ENCODE measurements at regions of chr1 and their contacts with region 1.

Region 1: DNA sequence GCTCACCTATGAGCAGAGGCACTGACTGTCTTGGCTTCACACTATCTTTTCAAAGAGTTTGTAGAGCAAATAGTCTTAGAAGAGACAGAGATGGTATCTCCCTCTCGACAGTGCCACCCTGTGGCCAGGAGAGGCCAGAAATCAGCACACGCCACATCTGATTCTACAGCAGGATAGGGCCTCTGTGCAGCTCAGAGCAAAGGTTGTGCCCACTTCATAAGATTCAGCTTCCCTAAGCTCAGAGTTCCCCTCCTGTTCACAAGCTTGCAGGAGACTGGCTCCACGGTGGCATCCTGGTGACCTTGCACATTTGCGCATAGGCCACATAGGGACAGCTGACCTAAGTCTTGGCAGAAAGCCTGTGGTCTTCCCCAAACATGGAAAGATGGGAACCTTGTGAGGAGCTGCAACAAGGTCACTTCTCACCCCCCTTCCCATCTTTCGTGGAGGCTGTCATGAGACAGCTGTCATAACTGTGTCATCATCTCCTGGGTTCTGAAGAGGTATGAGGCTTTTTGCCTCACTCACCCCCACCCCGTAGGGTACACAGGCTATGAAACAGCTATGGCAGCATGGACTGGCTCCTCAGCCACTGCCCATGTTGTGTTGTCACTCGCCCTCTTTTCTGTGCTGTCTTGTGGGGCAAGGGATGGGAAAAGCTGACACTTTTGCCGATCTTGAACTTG is 3.0 kb downstream of the ITLN2 start:
- DNase-seq: peak; percentile 43 to 86 (median 70)
- H3K4me3 ChIP-seq: no peak overlapping the region
- H3K27ac ChIP-seq: no peak overlapping the region
- H3K4me1 ChIP-seq: peaks cover 13% of the 10 kb centered on the region
- H3K27me3 ChIP-seq: no peaks in the 10 kb centered on the region
- CTCF ChIP-seq: peak in 1 of 3 donors; percentile 25
- EP300 ChIP-seq: no peak
- POLR2A ChIP-seq: no peak

Region 2: GRCh38 chr1:160590488-160590887 is 361.1 kb before region 1 on chr1:
- intact Hi-C with region 1: no loop called
- DNase-seq: no peak
- H3K4me3 ChIP-seq: no peak overlapping the region
- H3K27ac ChIP-seq: no peak overlapping the region
- H3K4me1 ChIP-seq: no peaks in the 10 kb centered on the region
- H3K27me3 ChIP-seq: no peaks in the 10 kb centered on the region
- CTCF ChIP-seq: no peak
- EP300 ChIP-seq: no peak
- POLR2A ChIP-seq: no peak

Region 3: GRCh38 chr1:160837558-160838205 is 113.9 kb before region 1 on chr1:
- intact Hi-C with region 1: loop called in 1 of 4 experiments (anchors 5 kb)
- DNase-seq: peak in 4 of 5 donors; percentile 23 to 64 (median 30)
- H3K4me3 ChIP-seq: no peak overlapping the region
- H3K27ac ChIP-seq: no peak overlapping the region
- H3K4me1 ChIP-seq: peaks cover 4% of the 10 kb centered on the region
- H3K27me3 ChIP-seq: no peaks in the 10 kb centered on the region
- CTCF ChIP-seq: no peak
- EP300 ChIP-seq: no peak
- POLR2A ChIP-seq: no peak

Measured in ovary (tissue), 10 donors.